Mammary epithelial cell (primary cell): ENCODE measurements at regions of chr7 and their contacts with region 1.

Region 1: GRCh38 chr7:74449809-74450397 is 3.8 kb upstream of the GTF2IRD1 start:
- DNase-seq: no peak
- H3K4me3 ChIP-seq: no peak overlapping the region
- H3K27ac ChIP-seq: no peak overlapping the region
- H3K4me1 ChIP-seq: peaks cover 18% of the 10 kb centered on the region
- H3K27me3 ChIP-seq: no peaks in the 10 kb centered on the region
- CTCF ChIP-seq: peak; percentile 81 to 84

Region 2: GRCh38 chr7:74401137-74401859 is 48.6 kb before region 1 on chr7:
- CTCF ChIA-PET with region 1: no interaction called
- dilution Hi-C with region 1: no loop called
- in situ Hi-C with region 1: no loop called
- intact Hi-C with region 1: no loop called
- DNase-seq: peak; percentile 42
- H3K4me3 ChIP-seq: no peak overlapping the region
- H3K27ac ChIP-seq: no peak overlapping the region
- H3K4me1 ChIP-seq: no peaks in the 10 kb centered on the region
- H3K27me3 ChIP-seq: no peaks in the 10 kb centered on the region
- CTCF ChIP-seq: peak; percentile 98

Region 3: GRCh38 chr7:74489997-74490945 is 40.4 kb after region 1 on chr7:
- CTCF ChIA-PET with region 1: no interaction called
- dilution Hi-C with region 1: loop called (anchors 5 kb)
- in situ Hi-C with region 1: no loop called
- intact Hi-C with region 1: no loop called
- DNase-seq: no peak
- H3K4me3 ChIP-seq: no peak overlapping the region
- H3K27ac ChIP-seq: no peak overlapping the region
- H3K4me1 ChIP-seq: no peaks in the 10 kb centered on the region
- H3K27me3 ChIP-seq: no peaks in the 10 kb centered on the region
- CTCF ChIP-seq: no peak

Region 4: GRCh38 chr7:74535951-74536356 is 86.1 kb after region 1 on chr7:
- CTCF ChIA-PET with region 1: no interaction called
- dilution Hi-C with region 1: no loop called
- in situ Hi-C with region 1: loop called in 1 of 2 experiments (anchors 10 kb)
- intact Hi-C with region 1: no loop called
- DNase-seq: no peak
- H3K4me3 ChIP-seq: no peak overlapping the region
- H3K27ac ChIP-seq: no peak overlapping the region
- H3K4me1 ChIP-seq: no peaks in the 10 kb centered on the region
- H3K27me3 ChIP-seq: no peaks in the 10 kb centered on the region
- CTCF ChIP-seq: no peak

Region 5: GRCh38 chr7:74554178-74554577 is 104.3 kb after region 1 on chr7:
- CTCF ChIA-PET with region 1: no interaction called
- dilution Hi-C with region 1: loop called (anchors 5 kb)
- in situ Hi-C with region 1: loop called in 1 of 2 experiments (anchors 25 kb)
- intact Hi-C with region 1: no loop called
- DNase-seq: no peak
- H3K4me3 ChIP-seq: no peak overlapping the region
- H3K27ac ChIP-seq: no peak overlapping the region
- H3K4me1 ChIP-seq: no peaks in the 10 kb centered on the region
- H3K27me3 ChIP-seq: no peaks in the 10 kb centered on the region
- CTCF ChIP-seq: no peak

Region 6: GRCh38 chr7:74656837-74657691 is 207.2 kb after region 1 on chr7:
- CTCF ChIA-PET with region 1: no interaction called
- dilution Hi-C with region 1: no loop called
- in situ Hi-C with region 1: no loop called
- intact Hi-C with region 1: loop called (anchors 5 kb)
- DNase-seq: peak; percentile 93
- H3K4me3 ChIP-seq: peak overlapping the region; percentile 82 to 90 (median 85)
- H3K27ac ChIP-seq: peak overlapping the region; percentile 87
- H3K4me1 ChIP-seq: peaks cover 39% of the 10 kb centered on the region
- H3K27me3 ChIP-seq: no peaks in the 10 kb centered on the region
- CTCF ChIP-seq: peak in 1 of 2 donors; percentile 22